WTC11 (cell line): ENCODE measurements at regions of chr17 and their contacts with region 1.

Region 1: DNA sequence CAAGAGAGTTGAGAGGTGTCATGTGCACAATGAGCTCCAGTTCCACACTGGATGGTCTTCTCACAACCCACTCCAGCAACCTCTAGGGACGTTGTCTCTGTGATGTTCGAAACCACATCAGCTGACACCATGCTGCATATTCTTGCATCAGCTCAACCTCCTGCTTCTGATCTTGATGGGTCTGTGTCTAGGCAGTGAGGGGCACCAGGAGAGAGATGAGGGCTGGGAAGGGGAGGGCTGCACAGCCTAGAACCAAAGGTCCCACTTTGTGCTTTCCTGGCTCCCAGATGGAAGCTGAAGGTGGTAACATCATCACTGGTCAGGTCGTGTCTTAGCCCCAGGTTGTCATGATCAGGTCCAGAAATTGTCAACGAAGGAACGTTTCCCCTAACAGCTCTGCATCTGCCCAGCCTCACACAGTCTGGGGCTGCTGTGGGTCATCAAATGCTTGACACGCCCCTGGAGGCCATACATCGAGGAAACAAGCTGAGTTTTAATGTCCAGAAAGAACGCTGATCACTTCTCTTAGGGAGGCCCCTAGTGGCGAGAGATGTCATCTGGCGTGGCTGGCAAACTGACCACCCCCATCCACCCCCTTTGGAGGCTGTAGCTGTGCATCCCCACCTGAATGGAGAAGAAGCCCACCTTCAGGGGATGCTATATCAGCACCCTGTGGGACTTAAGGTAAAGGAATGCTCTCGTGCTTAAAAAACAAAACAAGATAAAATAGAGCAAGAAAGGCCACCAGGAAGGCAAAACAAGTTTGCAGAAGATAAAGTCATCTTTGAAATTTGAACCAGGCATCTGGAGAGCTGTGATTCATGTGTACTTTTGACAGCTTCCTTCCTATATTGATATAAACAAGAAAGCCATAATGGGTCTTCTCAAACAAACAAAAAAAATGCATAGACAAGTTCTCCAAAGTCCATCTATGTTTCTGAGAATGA is 58.3 kb downstream of the WIPI1 start:
- DNase-seq: peak; percentile 75
- ATAC-seq: peak; percentile 93
- H3K4me3 Mint-ChIP-seq: no peak overlapping the region
- H3K27ac Mint-ChIP-seq: no peak overlapping the region
- H3K4me1 Mint-ChIP-seq: peaks cover 28% of the 10 kb centered on the region
- H3K27me3 Mint-ChIP-seq: no peaks in the 10 kb centered on the region; the same call in 1 of the 2 replicates
- CTCF ChIP-seq: peak; percentile 29; the same call in 1 of the 2 replicates

Region 2: DNA sequence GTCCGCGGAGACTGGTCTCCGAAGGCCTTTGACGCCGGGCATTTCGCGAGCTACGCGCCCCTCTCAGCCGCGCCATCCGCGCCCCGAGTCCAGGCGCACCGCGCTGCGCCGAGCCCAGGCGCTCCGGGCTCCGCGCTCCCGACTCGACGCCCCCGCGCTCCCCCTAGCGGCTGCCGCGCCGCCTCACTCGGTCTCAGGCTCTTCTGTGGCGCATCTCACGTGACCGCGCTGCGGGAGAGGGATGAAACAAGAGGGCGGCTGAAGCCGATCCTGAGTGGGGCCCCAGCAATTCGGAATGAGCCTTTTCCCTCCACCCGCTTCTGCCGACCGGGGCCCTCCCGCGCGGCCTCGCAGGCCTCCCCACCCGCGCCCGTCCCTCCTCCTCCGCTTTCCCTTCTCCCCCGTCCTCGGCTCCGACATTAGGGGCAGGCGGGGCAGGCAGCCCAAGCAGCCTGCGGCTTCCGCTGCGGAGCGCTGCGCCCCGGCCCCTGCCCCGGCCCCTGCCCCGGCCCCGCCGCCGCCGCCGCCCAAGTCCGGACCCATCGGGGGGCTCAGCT is 193.6 kb before region 1 on chr17:
- CTCF ChIA-PET with region 1: interaction called, 14 read pairs
- POLR2A ChIA-PET with region 1: no interaction called
- DNase-seq: peak; percentile 90
- ATAC-seq: peak; percentile 75
- H3K4me3 Mint-ChIP-seq: peak overlapping the region; percentile 85
- H3K27ac Mint-ChIP-seq: no peak overlapping the region
- H3K4me1 Mint-ChIP-seq: peaks cover 18% of the 10 kb centered on the region
- H3K27me3 Mint-ChIP-seq: peaks cover 48% of the 10 kb centered on the region
- CTCF ChIP-seq: peak; percentile 91

Region 3: GRCh38 chr17:68260051-68260762 is 138.8 kb before region 1 on chr17:
- CTCF ChIA-PET with region 1: interaction called, 35 read pairs
- POLR2A ChIA-PET with region 1: no interaction called
- DNase-seq: no peak
- ATAC-seq: no peak
- H3K4me3 Mint-ChIP-seq: peak overlapping the region; percentile 63; the same call in 1 of the 2 replicates
- H3K27ac Mint-ChIP-seq: no peak overlapping the region
- H3K4me1 Mint-ChIP-seq: peaks cover 12% of the 10 kb centered on the region
- H3K27me3 Mint-ChIP-seq: peaks cover 6% of the 10 kb centered on the region
- CTCF ChIP-seq: no peak

Region 4: GRCh38 chr17:68368387-68368786 is 30.6 kb before region 1 on chr17:
- CTCF ChIA-PET with region 1: interaction called, 11 read pairs
- POLR2A ChIA-PET with region 1: no interaction called
- DNase-seq: no peak
- ATAC-seq: 0 out of 2 replicates have a peak, but pooled peaks have one; percentile 36
- H3K4me3 Mint-ChIP-seq: no peak overlapping the region
- H3K27ac Mint-ChIP-seq: no peak overlapping the region
- H3K4me1 Mint-ChIP-seq: peaks cover 3% of the 10 kb centered on the region
- H3K27me3 Mint-ChIP-seq: no peaks in the 10 kb centered on the region
- CTCF ChIP-seq: no peak

Region 5: DNA sequence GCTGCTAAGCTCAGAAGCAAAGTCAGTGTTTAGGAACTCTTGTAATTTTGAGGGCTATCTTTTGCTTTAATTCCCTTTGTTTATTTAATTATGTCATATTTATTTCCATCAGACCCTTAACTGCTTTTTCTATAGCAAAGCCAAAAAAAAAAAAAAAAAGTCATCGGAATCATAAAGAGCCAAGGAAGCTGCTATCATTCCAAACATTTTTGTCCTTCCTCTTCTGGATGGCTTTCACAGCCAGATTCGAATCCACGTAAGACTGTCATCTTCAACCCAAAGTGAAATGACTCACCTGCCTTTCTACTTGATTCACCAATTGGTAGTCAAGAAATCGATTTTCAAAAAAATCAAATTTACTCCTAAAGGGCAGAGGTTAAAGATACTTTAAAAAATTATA is 19.9 kb after region 1 on chr17:
- CTCF ChIA-PET with region 1: interaction called, 20 read pairs
- POLR2A ChIA-PET with region 1: no interaction called
- DNase-seq: no peak
- ATAC-seq: no peak
- H3K4me3 Mint-ChIP-seq: no peak overlapping the region
- H3K27ac Mint-ChIP-seq: no peak overlapping the region
- H3K4me1 Mint-ChIP-seq: peaks cover 43% of the 10 kb centered on the region
- H3K27me3 Mint-ChIP-seq: peaks cover 9% of the 10 kb centered on the region
- CTCF ChIP-seq: no peak

Region 6: DNA sequence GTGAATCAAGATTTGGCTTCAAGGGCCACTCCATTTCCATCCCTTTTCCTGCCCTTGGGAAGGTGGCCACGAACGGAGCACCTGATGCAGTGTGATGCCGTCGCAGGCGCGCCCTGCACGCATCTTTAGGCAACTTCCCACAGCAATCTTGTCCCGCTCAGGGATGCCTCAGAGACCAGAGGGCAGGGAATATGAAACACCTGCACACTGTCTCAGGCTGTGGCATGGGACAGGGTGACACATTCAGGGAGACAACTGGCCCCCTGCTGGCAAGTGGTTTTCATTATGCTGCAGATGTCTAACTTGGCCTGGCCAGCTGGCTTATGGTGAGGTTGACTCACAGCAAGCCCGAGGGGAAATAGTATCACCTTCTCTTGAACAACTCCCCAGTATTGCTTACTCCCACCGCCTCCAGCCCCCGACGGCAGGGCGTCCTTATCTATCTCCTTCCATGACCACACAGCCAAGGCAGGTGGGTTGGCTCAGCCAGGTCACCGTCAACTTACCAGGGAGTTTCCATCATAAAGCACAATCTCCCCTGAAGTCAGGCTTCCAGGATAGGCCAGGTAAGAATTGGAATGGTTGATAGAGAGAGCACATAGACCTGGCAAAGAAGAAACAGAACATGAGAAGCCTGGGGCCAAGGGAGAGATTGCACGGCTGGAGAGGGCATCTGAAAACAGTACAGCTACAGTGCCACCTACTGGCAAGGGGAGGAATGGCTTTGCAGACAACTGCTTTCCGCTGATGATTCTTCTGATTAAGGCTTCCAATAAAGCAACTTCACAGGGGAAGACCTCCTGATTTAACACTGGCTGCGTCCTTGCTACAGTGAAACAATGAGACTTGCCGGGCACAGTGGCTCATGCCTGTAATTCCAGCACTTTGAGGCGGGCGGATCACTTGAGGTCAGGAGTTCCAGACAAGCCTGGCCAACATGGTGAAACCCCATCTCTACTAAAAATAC is 37.2 kb after region 1 on chr17:
- CTCF ChIA-PET with region 1: interaction called, 18 read pairs
- POLR2A ChIA-PET with region 1: no interaction called
- DNase-seq: peak; percentile 82
- ATAC-seq: peak; percentile 83
- H3K4me3 Mint-ChIP-seq: no peak overlapping the region
- H3K27ac Mint-ChIP-seq: peak overlapping the region; percentile 87
- H3K4me1 Mint-ChIP-seq: peaks cover 26% of the 10 kb centered on the region
- H3K27me3 Mint-ChIP-seq: no peaks in the 10 kb centered on the region
- CTCF ChIP-seq: peak; percentile 96

Region 7: GRCh38 chr17:68570526-68570925 is 171.6 kb after region 1 on chr17:
- CTCF ChIA-PET with region 1: no interaction called
- POLR2A ChIA-PET with region 1: no interaction called
- DNase-seq: no peak
- ATAC-seq: no peak
- H3K4me3 Mint-ChIP-seq: no peak overlapping the region
- H3K27ac Mint-ChIP-seq: no peak overlapping the region
- H3K4me1 Mint-ChIP-seq: no peaks in the 10 kb centered on the region
- H3K27me3 Mint-ChIP-seq: no peaks in the 10 kb centered on the region
- CTCF ChIP-seq: no peak